OCI-LY7 (cell line): ENCODE measurements at regions of chr15 and their contacts with region 1.

Region 1: DNA sequence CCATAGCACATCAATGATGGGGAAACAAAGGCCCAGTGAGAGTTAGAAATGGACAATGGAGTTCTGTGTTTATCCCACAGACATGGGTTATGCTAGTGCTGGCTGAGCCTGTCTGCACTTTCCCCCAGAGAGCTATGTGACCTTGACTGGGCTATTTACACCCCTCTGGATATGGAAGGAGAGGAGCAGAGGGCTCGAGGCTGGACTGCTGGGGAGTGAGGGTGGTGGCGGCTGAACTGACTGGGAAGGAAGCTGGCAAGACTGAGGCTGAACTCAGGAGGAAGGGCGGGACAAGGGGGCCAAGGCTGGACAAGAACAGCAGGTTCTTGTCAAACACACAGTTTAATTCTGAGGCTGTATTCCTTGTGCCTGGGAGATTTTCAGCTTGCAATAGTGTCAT is 10.8 kb upstream of the INSYN1 start:
- DNase-seq: no peak
- H3K4me3 ChIP-seq: no peak overlapping the region
- H3K27ac ChIP-seq: no peak overlapping the region
- H3K4me1 ChIP-seq: no peaks in the 10 kb centered on the region
- CTCF ChIP-seq: no peak

Region 2: GRCh38 chr15:73822998-73823397 is 59.1 kb after region 1 on chr15:
- CTCF ChIA-PET with region 1: no interaction called
- POLR2A ChIA-PET with region 1: no interaction called
- intact Hi-C with region 1: loop called (anchors 10 kb)
- DNase-seq: no peak
- H3K4me3 ChIP-seq: no peak overlapping the region
- H3K27ac ChIP-seq: no peak overlapping the region
- H3K4me1 ChIP-seq: no peaks in the 10 kb centered on the region
- CTCF ChIP-seq: no peak